Heart left ventricle (tissue), 16 donors: ENCODE measurements at regions of chr7 and their contacts with region 1.

Region 1: GRCh38 chr7:37176079-37176478 is 272.6 kb downstream of the ELMO1 start:
- DNase-seq: no peak
- ATAC-seq: no peak
- H3K4me3 ChIP-seq: no peak overlapping the region
- H3K27ac ChIP-seq: no peak overlapping the region
- H3K4me1 ChIP-seq: peaks cover 0 to 3% (median 0%) of the 10 kb centered on the region in 12 donors
- H3K27me3 ChIP-seq: no peaks in the 10 kb centered on the region
- CTCF ChIP-seq: no peak
- POLR2A ChIP-seq: no peak

Region 2: GRCh38 chr7:35801392-35802101 is 1374.5 kb before region 1 on chr7:
- intact Hi-C with region 1: no loop called
- DNase-seq: peak; percentile 74 to 87 (median 76)
- ATAC-seq: peak in 3 of 4 donors; percentile 23 to 65 (median 59)
- H3K4me3 ChIP-seq: peak overlapping the region; percentile 58 to 95 (median 88)
- H3K27ac ChIP-seq: peak overlapping the region; percentile 90 to 99 (median 97)
- H3K4me1 ChIP-seq: peaks cover 0 to 58% (median 36%) of the 10 kb centered on the region in 12 donors
- H3K27me3 ChIP-seq: no peaks in the 10 kb centered on the region
- CTCF ChIP-seq: peak; percentile 46 to 79 (median 64)
- POLR2A ChIP-seq: no peak

Region 3: GRCh38 chr7:36496576-36496975 is 679.5 kb before region 1 on chr7:
- intact Hi-C with region 1: loop called in 1 of 10 experiments (anchors 5 kb)
- DNase-seq: no peak
- ATAC-seq: no peak
- H3K4me3 ChIP-seq: no peak overlapping the region
- H3K27ac ChIP-seq: no peak overlapping the region
- H3K4me1 ChIP-seq: no peaks in the 10 kb centered on the region
- H3K27me3 ChIP-seq: peaks cover 0 to 13% (median 0%) of the 10 kb centered on the region in 9 donors
- CTCF ChIP-seq: no peak
- POLR2A ChIP-seq: no peak